B cell (primary cell): ENCODE measurements at regions of chr3 and their contacts with region 1.

Region 1: DNA sequence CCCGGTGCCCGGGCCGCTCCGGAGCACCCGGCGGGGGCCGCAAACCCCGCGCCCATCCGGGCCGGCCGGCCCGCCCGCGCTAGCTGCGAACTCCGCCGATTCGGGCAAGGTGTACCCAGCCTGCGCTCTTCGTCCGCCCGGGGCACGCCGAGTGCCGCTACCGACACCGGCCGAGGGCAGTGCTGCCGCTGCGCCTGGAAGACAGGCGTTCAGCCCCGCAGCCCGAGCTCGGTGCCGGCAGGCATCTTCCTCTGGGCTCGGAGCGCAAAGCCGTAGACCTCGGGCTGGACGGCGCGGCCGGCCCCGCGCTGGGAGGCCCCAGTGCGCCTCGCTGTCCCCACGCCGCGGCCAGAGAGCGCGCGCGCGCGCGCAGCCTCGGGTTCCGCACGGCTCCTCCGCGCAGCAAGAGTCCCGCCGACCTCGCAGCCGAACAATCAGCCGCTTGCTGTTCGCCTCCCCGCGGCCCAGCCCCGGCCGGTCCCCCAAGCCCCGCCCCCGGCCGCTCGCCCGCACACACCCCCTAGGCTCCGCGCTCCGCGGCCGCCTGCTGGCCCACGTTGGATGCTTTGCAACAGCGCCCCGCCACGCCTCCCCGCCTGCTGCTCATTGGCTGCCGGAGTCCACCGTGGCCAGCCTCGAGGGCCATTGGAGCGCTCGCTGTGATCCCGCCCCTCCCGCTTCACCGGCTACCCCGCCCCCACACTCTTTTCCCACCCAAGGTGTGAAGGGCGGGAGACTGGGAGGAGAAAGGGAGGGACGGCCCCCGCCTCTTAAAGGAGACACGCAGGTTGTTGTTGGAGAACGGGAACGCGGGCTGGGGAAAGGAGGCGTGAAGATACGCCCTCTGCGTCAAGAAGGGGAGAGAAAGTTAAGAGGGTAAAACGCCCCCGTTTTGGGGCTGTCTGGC is at the start of gene LRIG1:
- DNase-seq: peak; percentile 92
- ATAC-seq: peak; percentile 95
- H3K4me3 ChIP-seq: peak within 1 kb of the TSS; percentile 44 to 68 (median 64)
- H3K4me3 Mint-ChIP-seq: peak within 1 kb of the TSS; percentile 94
- H3K27ac ChIP-seq: no peak within 1 kb of the TSS
- H3K27ac Mint-ChIP-seq: peak within 1 kb of the TSS; percentile 71
- H3K4me1 ChIP-seq: peaks cover 20 to 22% of the 10 kb centered on the region in 2 donors
- H3K4me1 Mint-ChIP-seq: peaks cover 24% of the 10 kb centered on the region
- H3K27me3 ChIP-seq: peaks cover 0 to 20% (median 18%) of the 10 kb centered on the region in 4 experiments
- H3K27me3 Mint-ChIP-seq: peaks cover 40% of the 10 kb centered on the region
- CTCF ChIP-seq: peak; percentile 47
- total RNA-seq, gene LRIG1: 10.6 and 12.4 TPM in 2 replicates

Region 2: GRCh38 chr3:66276705-66277274 is 224.0 kb before region 1 on chr3:
- CTCF ChIA-PET with region 1: no interaction called
- POLR2A ChIA-PET with region 1: no interaction called
- intact Hi-C with region 1: loop called (anchors 5 kb)
- DNase-seq: peak; percentile 71
- ATAC-seq: peak; percentile 45
- H3K4me3 ChIP-seq: no peak overlapping the region
- H3K4me3 Mint-ChIP-seq: no peak overlapping the region
- H3K27ac ChIP-seq: no peak overlapping the region
- H3K27ac Mint-ChIP-seq: no peak overlapping the region
- H3K4me1 ChIP-seq: no peaks in the 10 kb centered on the region
- H3K4me1 Mint-ChIP-seq: no peaks in the 10 kb centered on the region
- H3K27me3 ChIP-seq: no peaks in the 10 kb centered on the region
- H3K27me3 Mint-ChIP-seq: no peaks in the 10 kb centered on the region
- CTCF ChIP-seq: peak; percentile 87

Region 3: DNA sequence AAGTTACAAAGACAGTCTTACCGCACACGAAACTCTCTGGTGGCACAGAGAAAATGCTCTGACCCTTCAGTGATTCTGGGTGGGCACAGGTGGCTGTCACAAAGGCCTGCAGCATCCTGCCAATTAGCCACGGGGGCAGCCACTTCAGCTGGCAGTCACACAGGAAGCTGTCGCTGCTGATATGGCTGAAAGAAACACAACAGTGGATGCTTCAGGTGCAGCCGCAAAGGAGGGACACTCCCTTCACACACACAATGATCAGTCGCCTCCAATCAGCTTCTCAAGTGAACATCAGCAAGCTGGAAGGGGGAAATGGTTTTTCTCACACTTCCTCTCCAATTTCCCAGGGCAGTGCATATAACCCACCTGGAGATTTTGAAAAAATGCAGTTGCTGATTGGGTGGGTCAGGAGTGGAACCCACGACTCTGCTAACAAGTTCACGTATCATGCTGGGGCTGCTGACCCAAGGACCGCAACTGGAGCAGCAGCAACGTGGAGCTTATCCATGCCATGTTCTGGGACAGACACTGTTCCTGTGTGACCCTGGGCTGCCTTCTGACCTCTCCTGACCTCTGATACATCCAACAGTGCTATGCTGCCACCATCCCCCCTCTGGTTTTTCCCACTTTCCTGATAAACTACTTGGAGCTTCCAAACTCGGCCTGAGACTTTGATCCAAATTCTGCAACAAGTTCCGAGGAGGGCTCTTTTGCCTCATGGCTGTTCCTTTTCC is 106.6 kb before region 1 on chr3:
- CTCF ChIA-PET with region 1: no interaction called
- POLR2A ChIA-PET with region 1: interaction called, 4 read pairs
- intact Hi-C with region 1: loop called (anchors 5 kb)
- DNase-seq: peak; percentile 79
- ATAC-seq: peak; percentile 88
- H3K4me3 ChIP-seq: peak overlapping the region; percentile 37 to 71 (median 58)
- H3K4me3 Mint-ChIP-seq: peak overlapping the region; percentile 92
- H3K27ac ChIP-seq: peak overlapping the region; percentile 66 to 72
- H3K27ac Mint-ChIP-seq: peak overlapping the region; percentile 92
- H3K4me1 ChIP-seq: peaks cover 35 to 48% of the 10 kb centered on the region in 2 donors
- H3K4me1 Mint-ChIP-seq: peaks cover 53% of the 10 kb centered on the region
- H3K27me3 ChIP-seq: no peaks in the 10 kb centered on the region
- H3K27me3 Mint-ChIP-seq: no peaks in the 10 kb centered on the region
- CTCF ChIP-seq: no peak

Region 4: GRCh38 chr3:66472313-66473134 is 28.3 kb before region 1 on chr3:
- CTCF ChIA-PET with region 1: no interaction called
- POLR2A ChIA-PET with region 1: interaction called, 3 read pairs
- intact Hi-C with region 1: loop called (anchors 2 kb)
- DNase-seq: peak; percentile 56
- ATAC-seq: peak; percentile 81
- H3K4me3 ChIP-seq: peak overlapping the region in 1 of 5 experiments; percentile 8
- H3K4me3 Mint-ChIP-seq: peak overlapping the region; percentile 72
- H3K27ac ChIP-seq: peak overlapping the region in 1 of 2 donors; percentile 44
- H3K27ac Mint-ChIP-seq: peak overlapping the region; percentile 79
- H3K4me1 ChIP-seq: peaks cover 12 to 22% of the 10 kb centered on the region in 2 donors
- H3K4me1 Mint-ChIP-seq: peaks cover 40% of the 10 kb centered on the region
- H3K27me3 ChIP-seq: peaks cover 0 to 11% (median 0%) of the 10 kb centered on the region in 4 experiments
- H3K27me3 Mint-ChIP-seq: peaks cover 16% of the 10 kb centered on the region
- CTCF ChIP-seq: no peak

Region 5: DNA sequence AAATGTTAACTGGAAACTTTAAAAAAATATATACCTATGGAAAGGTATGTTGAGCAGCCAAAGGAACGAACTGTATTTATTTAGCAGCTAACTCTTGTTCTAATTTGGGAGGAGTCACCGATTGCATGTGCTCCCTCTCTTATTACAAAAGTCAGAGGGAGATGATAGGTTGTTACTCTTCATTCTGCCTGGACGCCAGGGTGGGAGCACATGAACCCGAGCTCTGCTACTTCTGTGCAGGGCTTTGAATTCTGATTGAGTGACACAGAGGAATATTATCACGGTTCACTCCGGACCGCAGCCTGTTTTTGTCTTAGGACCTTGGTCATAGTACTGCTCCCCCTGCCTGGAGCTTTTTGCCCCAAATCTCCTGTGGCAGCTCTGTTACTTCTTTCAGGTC is 36.9 kb after region 1 on chr3:
- CTCF ChIA-PET with region 1: no interaction called
- POLR2A ChIA-PET with region 1: no interaction called
- intact Hi-C with region 1: no loop called
- DNase-seq: no peak
- ATAC-seq: no peak
- H3K4me3 ChIP-seq: no peak overlapping the region
- H3K4me3 Mint-ChIP-seq: no peak overlapping the region
- H3K27ac ChIP-seq: no peak overlapping the region
- H3K27ac Mint-ChIP-seq: no peak overlapping the region
- H3K4me1 ChIP-seq: peaks cover 5 to 11% of the 10 kb centered on the region in 2 donors
- H3K4me1 Mint-ChIP-seq: peaks cover 3% of the 10 kb centered on the region
- H3K27me3 ChIP-seq: peaks cover 0 to 13% (median 4%) of the 10 kb centered on the region in 4 experiments
- H3K27me3 Mint-ChIP-seq: peaks cover 13% of the 10 kb centered on the region
- CTCF ChIP-seq: no peak